ENCODE measurements at regions of chr4 and their contacts with region 1.

Region 1: GRCh38 chr4:127103681-127104115 is 529.1 kb upstream of the INTU start:
- DNase-seq: no peak

Region 2: GRCh38 chr4:127120441-127121090 is 16.9 kb after region 1 on chr4:
- intact Hi-C with region 1: loop called in 1 of 2 experiments (anchors 1 kb)
- DNase-seq: no peak

Region 3: DNA sequence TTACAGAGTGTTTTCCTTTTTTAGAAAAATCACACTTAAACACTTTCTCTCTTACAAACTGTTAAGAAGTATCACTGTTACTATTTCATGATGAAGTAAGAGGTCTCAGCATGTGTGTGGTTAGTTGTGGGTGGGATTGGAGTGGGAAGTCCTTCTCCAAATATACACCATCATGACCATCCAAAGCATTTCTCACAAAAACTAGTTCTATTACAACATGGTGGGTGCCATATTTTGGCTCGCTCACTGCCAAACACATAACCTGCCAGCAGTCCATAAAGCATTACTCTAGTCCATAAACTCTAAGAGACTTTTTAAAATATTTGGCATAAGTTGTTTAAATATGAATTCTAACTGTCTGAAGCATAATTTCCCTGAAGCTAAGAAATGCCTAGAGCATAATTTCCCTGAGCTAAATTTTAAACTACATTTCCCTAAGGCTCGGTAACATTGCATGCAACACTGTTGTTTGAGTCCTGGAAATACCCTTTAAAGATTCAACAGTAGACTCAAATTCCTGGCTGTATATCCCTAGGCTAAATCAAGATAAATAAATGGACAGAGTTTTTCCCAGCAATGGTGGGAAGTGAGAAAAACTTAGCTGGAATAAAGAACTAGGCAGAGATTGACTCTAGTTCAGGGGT is 114.0 kb after region 1 on chr4:
- intact Hi-C with region 1: no loop called
- DNase-seq: no peak